ENCODE measurements at regions of chr10 and their contacts with region 1.

Region 1: GRCh38 chr10:45470098-45471012 is 96.3 kb downstream of the ALOX5 start:
- DNase-seq: peak; percentile 80 to 96 (median 87)
- ATAC-seq: peak; percentile 90
- H3K4me3 ChIP-seq: no peak overlapping the region
- H3K27ac ChIP-seq: peak overlapping the region; percentile 98
- H3K4me1 ChIP-seq: peaks cover 26 to 54% of the 10 kb centered on the region in 2 experiments
- H3K27me3 ChIP-seq: no peaks in the 10 kb centered on the region
- CTCF ChIP-seq: no peak; a peak in 1 of 6 replicates
- EP300 ChIP-seq: peak; percentile 100
- POLR2A ChIP-seq: peak; percentile 60
- RAD21 ChIP-seq: peak; percentile 46 to 49

Region 2: DNA sequence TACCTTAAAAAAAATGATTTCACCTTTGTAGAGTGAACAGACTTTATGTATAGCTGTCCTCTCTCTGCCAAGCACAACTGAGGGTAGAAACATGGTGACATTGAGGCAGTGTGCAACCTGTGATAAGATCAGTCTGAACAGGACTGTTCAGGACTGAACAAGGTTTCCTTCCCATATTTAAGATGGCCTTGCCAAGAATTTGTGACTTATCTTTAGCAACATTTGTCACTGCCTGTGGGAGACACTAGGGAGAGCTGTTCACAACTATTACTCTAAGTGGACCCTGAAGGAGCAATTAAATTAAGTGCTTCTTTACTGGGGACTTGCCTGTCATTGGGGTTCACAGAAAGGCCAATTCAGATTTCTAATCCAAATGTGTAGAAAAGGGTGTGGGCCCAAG is 161.6 kb before region 1 on chr10:
- CTCF ChIA-PET with region 1: no interaction called
- POLR2A ChIA-PET with region 1: no interaction called
- in situ Hi-C with region 1: no loop called
- intact Hi-C with region 1: loop called (anchors 2 kb)
- DNase-seq: peak in 2 of 4 experiments; percentile 41 to 70
- ATAC-seq: peak; percentile 93
- H3K4me3 ChIP-seq: no peak overlapping the region
- H3K27ac ChIP-seq: no peak overlapping the region
- H3K4me1 ChIP-seq: peaks cover 3 to 10% of the 10 kb centered on the region in 2 experiments; a peak in 4 of 5 replicates
- H3K27me3 ChIP-seq: no peaks in the 10 kb centered on the region
- CTCF ChIP-seq: peak; percentile 50 to 80 (median 68)
- EP300 ChIP-seq: no peak
- POLR2A ChIP-seq: no peak
- RAD21 ChIP-seq: peak; percentile 70 to 76

Region 3: DNA sequence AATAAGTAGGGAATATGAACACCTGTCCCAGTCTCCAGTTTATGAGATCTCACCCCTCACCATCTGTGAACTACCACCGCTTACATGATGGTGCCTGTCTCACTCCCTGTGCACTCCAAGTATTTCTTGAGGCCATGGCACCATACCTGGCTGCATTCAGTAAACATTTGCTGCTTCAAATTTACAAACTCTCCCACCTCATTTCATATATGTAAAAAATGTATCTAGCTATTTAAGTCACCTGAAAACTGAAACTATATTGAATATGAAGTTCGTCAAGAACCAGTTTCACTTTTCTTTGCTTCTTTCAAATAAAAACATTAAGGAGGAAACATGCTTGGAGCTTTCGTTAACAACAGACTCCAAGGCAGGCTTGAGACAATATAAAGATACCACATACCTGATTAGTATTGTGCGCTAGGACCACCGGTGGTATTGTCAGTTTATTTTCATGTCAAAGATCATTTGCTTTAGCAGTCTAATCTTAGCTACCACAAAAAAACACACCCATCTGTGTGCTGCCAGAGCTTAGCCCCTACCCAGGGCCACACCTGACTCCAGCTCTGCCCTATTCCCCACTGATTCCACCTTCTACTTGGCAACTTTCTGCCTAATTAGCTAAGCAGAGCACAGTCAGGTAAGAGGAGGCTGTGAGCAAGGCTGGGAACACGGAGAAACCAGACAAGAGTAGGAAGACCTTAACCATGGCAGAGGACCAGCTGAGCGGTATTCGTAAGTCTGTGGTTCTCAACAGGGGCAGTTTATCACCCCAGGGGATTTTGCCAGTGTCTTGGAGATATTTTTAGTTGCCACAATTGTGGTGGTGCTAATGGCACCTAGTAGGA is 110.2 kb after region 1 on chr10:
- CTCF ChIA-PET with region 1: no interaction called
- POLR2A ChIA-PET with region 1: interaction called, 3 read pairs
- in situ Hi-C with region 1: no loop called
- intact Hi-C with region 1: loop called (anchors 2 kb)
- DNase-seq: peak in 2 of 4 experiments; percentile 27 to 38
- ATAC-seq: peak; percentile 72
- H3K4me3 ChIP-seq: peak overlapping the region; percentile 8; the same call in 1 of the 2 replicates
- H3K27ac ChIP-seq: peak overlapping the region; percentile 62
- H3K4me1 ChIP-seq: peaks cover 6 to 29% of the 10 kb centered on the region in 2 experiments
- H3K27me3 ChIP-seq: no peaks in the 10 kb centered on the region
- CTCF ChIP-seq: no peak
- EP300 ChIP-seq: no peak
- POLR2A ChIP-seq: no peak
- RAD21 ChIP-seq: no peak

Region 4: DNA sequence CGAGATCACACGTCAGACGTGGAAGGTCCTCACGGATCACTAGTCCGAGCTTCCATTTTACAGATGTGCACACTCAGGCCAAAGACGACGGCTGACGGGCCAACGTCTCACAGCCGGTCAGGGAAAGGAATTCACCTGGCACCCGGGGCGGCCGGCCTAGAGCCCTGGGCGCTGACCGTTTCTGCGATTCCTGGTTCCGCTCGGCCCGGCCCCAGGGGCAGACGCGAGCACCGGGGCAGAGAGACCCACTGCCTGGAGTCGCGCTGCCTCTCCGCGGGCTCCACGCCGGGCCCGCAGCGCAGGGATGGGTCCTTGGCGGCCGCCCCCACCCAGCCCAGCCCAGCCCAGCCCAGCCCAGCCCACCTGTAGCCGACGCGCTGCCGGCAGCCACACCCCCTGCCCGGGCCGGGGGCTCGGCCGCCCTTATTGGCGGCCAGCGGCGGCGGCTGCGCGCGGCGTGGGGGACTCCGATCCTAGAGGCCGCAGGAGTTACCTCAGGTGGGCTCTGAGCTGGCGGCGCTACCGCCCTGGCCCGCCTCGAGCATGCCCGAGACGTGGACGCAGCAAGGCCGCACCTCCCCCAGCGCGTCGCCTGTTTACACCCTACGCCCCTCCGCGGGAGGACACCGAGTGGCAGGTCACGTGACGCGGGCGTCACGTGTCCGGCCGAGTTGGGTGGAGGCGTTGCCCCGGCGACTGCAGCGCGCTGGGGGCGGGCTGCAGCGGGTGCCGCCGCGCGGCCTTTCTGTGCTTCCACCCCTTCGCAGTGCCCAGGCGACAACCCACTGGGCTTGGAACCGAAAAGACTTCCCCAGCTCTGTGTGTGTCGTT is 124.1 kb after region 1 on chr10:
- CTCF ChIA-PET with region 1: no interaction called
- POLR2A ChIA-PET with region 1: interaction called, 4 read pairs
- in situ Hi-C with region 1: no loop called
- intact Hi-C with region 1: loop called (anchors 2 kb)
- DNase-seq: peak; percentile 95 to 98 (median 98)
- ATAC-seq: peak; percentile 92
- H3K4me3 ChIP-seq: peak overlapping the region; percentile 57
- H3K27ac ChIP-seq: peak overlapping the region; percentile 70
- H3K4me1 ChIP-seq: peaks cover 5 to 8% of the 10 kb centered on the region in 2 experiments; a peak in 2 of 5 replicates
- H3K27me3 ChIP-seq: no peaks in the 10 kb centered on the region
- CTCF ChIP-seq: peak in 1 of 3 experiments; percentile 16; a peak in 1 of 6 replicates
- EP300 ChIP-seq: peak; percentile 61; the same call in 1 of the 2 replicates
- POLR2A ChIP-seq: peak; percentile 66
- RAD21 ChIP-seq: peak; percentile 34 to 41

Region 5: DNA sequence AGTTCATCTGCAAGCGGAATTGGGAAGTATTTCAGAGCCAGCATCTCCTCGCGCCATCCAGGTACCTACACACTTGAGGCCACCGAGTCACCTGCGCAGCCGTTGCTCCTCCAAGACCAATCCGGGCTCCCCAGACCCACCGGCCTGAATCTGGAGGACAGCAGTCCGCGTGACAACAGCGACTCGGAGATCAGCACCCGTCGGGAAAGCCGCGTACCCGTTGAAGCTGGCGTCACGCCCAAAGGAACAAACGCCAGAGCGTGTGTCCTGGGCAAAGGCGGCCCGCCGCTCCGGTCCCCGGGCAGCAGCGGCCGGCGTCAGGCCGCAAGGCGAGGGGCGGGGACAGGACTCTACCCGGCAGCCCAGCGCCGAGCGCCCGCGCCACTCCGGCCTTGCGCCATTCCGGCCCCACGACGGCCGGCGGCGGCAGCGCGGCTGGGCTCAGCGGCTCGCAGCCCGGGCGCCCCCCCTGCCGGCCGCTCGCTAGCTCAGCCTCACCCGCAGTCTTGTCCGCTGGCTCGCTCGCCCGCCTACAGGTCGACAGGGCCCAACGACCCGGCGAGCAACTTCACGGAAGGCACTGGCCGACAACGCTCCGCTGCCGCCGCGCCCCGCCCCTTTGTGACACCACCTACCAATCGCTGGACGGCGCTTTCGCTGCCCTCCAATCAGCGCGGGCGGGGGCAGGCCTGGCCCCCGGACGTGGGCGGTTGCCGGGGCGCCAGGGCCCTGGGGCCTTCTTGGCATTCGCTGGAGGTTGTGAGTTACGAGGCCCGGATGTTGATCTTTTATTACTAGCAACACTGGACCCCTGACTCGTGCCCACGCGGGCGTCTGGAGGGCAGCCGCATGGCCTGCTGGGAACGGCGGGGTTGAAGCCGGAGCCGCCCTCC is 202.1 kb after region 1 on chr10 and contains the start of gene ZFAND4:
- CTCF ChIA-PET with region 1: interaction called, 5 read pairs
- POLR2A ChIA-PET with region 1: no interaction called
- in situ Hi-C with region 1: no loop called
- intact Hi-C with region 1: loop called (anchors 2 kb)
- DNase-seq: peak; percentile 73 to 79 (median 78)
- ATAC-seq: peak; percentile 98
- H3K4me3 ChIP-seq: peak within 1 kb of the TSS; percentile 38
- H3K27ac ChIP-seq: peak within 1 kb of the TSS; percentile 55
- H3K4me1 ChIP-seq: peaks cover 0 to 12% of the 10 kb centered on the region in 2 experiments; a peak in 2 of 5 replicates
- H3K27me3 ChIP-seq: no peaks in the 10 kb centered on the region
- CTCF ChIP-seq: peak; percentile 34 to 87 (median 54); a peak in 4 of 6 replicates
- EP300 ChIP-seq: no peak
- POLR2A ChIP-seq: no peak
- RAD21 ChIP-seq: peak in 1 of 2 experiments; percentile 73; a peak in 3 of 4 replicates
- polyA plus RNA-seq, gene ZFAND4: 0.42 to 0.73 TPM

Measured in K562 (cell line).